ENCODE measurements at regions of chr19 and their contacts with region 1.

Region 1: GRCh38 chr19:56712611-56713276 is 41.2 kb upstream of the ZNF835 start:
- DNase-seq: peak; percentile 19
- H3K4me3 ChIP-seq: no peak overlapping the region
- H3K27ac ChIP-seq: no peak overlapping the region
- H3K4me1 ChIP-seq: no peaks in the 10 kb centered on the region
- H3K27me3 ChIP-seq: no peaks in the 10 kb centered on the region
- CTCF ChIP-seq: no peak
- POLR2A ChIP-seq: no peak

Region 2: GRCh38 chr19:58237324-58237723 is 1524.6 kb after region 1 on chr19:
- intact Hi-C with region 1: loop called (anchors 5 kb)
- DNase-seq: no peak
- H3K4me3 ChIP-seq: no peak overlapping the region
- H3K27ac ChIP-seq: no peak overlapping the region
- H3K4me1 ChIP-seq: no peaks in the 10 kb centered on the region
- H3K27me3 ChIP-seq: no peaks in the 10 kb centered on the region
- CTCF ChIP-seq: no peak
- POLR2A ChIP-seq: no peak